AG04450 (cell line): ENCODE measurements at regions of chr1 and their contacts with region 1.

Region 1: DNA sequence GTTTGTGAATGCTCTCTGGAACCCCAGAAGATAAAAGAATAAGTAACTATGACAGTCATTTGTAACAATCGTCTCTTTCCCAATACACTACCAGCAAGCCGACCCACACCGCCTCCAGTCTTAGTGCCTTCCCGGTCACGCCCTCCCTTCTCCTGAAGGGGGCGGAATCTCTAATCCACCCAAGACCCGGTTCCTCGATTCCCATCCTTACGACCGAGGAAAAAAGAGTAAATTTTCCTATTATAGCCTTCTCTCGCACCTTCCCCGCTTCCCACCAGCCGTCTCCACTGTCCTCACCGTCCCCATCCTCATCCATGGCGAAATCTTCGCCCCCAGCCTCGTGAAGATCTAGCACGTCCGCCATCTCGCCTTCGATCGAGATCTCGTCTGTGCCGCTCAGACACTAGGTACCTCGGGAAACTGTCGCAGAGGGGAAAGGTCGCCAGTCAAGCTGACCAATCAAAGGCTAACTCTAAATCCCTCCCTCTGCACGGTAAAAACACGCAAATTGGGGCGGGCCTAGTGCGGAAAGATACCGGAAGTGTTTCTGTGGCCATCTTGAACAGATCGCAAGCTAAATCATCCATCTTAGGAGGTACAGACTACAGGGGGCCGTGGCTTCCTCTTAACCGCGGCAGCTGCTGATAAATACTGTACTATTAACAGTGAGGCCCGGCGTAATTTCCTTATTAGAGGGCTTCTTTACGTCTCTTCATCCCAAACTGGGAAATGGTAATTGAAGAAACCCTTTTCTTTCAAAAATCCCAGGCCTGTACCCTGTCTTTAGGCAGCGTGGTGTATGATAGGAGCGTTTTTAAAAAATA is at the start of gene RBM8A:
- DNase-seq: peak; percentile 95
- H3K4me3 ChIP-seq: peak within 1 kb of the TSS; percentile 85
- H3K27ac ChIP-seq: peak within 1 kb of the TSS; percentile 80
- H3K27me3 ChIP-seq: no peaks in the 10 kb centered on the region
- CTCF ChIP-seq: peak; percentile 68
- polyA plus RNA-seq, gene RBM8A: 134 and 158 TPM in 2 replicates

Region 2: DNA sequence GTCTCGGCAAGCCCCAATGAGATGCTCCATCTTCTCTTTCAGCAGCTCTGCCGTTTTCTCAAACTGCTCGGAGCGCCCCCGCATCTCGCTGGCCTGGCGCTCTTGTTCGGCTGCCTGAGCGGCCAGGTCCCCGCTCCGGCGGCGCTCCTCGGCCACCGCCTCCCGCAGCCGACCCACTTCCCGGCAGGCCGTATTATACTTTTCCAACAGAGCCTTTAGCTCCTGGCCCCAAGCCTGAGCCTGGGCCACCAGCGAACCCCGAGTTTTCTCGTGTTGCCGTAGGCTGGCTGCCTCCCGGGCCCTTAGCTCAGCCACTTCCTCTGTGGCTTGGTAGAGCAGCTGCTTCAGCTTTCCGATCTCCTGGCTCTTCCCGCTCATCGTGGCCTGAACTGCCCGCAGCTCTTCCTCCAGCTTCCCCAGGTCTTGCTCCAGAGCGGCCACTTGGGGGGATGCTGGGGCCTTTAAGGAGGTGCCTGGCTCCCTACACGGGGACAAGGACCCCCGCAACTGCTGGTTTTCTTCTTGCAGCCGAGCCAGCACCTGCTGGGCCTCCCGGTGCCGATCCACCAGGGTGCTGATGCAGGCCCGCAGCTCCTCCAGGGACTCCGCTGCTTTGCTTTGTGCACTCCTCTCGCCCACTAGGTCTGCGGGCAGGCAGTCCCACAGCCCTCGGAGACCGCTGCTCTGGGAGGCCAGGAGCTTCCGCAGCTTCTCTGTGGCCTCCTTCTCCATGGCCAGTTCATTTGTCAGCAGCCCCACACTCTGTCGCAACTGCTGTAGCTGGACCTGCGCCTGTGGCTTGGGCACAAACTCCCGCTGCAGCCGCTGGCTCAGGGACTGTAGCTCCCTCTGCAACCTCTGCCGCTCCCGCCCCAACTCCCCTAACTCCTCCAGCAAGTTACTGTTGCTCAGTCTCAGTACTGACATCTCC is 55.0 kb before region 1 on chr1:
- CTCF ChIA-PET with region 1: interaction called, 9 read pairs
- POLR2A ChIA-PET with region 1: interaction called, 11 read pairs
- DNase-seq: no peak
- H3K4me3 ChIP-seq: peak overlapping the region; percentile 59
- H3K27ac ChIP-seq: peak overlapping the region; percentile 77
- H3K27me3 ChIP-seq: peaks cover 8% of the 10 kb centered on the region
- CTCF ChIP-seq: no peak

Region 3: DNA sequence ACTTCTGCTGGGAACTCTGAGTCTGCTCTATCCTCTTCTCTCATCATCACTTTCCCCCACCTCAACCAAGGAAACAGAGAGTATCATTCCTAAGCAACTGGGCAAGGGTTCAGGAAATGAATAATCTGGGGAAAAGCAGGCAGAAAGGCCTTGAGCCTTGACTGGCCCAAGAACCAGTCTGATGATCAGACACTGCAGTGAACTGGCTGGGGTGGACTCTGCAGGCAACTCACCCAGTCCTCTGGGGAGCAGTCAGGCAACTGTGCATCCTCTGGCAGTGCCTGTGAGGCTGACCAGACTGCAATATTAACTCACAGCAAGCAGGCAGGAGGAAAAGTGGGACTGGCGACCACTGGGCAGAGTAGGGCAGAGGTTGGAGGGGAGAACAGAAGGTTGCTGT is 42.6 kb before region 1 on chr1:
- CTCF ChIA-PET with region 1: no interaction called
- POLR2A ChIA-PET with region 1: no interaction called
- DNase-seq: no peak
- H3K4me3 ChIP-seq: no peak overlapping the region
- H3K27ac ChIP-seq: no peak overlapping the region
- H3K27me3 ChIP-seq: no peaks in the 10 kb centered on the region
- CTCF ChIP-seq: no peak

Region 4: DNA sequence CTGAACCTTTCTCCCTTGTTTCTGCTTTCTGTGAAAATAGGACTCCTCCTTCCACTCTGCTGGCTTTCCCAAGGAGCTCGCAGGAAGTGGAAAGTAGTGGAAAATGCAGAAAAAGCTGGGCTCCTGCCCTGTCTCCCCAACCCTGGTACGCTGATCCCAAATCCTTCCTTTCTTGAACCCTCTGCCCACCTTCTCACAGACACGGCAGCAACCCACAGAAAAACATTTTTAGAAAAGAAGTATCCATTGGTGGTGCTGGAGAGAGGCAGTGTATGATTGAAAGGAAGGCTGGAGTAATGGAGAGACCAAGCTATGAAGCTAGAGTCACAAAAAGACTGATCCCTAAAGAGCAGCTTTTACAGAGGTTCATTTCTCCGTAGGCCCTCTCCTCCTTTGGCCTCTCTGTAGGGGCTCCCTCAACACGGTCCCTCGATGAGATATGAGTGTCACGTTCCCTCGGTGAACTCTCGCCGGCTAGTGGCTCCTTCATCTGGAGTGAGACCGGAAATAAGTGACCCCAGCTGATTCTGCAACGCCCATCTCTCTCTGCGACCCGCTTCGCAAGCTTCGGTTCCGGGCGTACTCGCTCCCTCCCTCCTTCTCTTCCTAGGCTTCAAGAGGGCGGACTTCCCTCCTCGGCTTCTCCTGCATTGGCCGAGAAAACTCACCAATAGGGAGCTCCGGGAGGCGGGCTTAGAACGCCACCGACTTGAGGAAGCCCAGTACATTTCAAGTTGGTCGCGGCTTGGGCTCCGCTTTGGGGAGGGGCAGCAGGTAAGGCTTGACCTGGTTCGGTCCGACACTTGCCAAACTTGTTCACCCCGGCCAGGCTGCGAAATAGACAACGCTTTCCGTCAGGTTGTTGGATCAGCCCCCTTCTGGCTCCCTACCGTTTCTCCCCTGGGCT is 37.0 kb after region 1 on chr1 and contains the starts of genes ANKRD34A and POLR3GL:
- CTCF ChIA-PET with region 1: interaction called, 5 read pairs
- POLR2A ChIA-PET with region 1: interaction called, 21 read pairs
- DNase-seq: peak; percentile 72
- H3K4me3 ChIP-seq: peak within 1 kb of the TSS; percentile 79
- H3K27ac ChIP-seq: peak within 1 kb of the TSS; percentile 89
- H3K27me3 ChIP-seq: no peaks in the 10 kb centered on the region
- CTCF ChIP-seq: peak; percentile 15; the same call in 1 of the 2 replicates
- polyA plus RNA-seq, gene ANKRD34A: 0.83 and 1.2 TPM in 2 replicates
- polyA plus RNA-seq, gene POLR3GL: 23.1 and 25.0 TPM in 2 replicates